Posterior cingulate gyrus (tissue), 11 donors: ENCODE measurements at regions of chr1 and their contacts with region 1.

Region 1: DNA sequence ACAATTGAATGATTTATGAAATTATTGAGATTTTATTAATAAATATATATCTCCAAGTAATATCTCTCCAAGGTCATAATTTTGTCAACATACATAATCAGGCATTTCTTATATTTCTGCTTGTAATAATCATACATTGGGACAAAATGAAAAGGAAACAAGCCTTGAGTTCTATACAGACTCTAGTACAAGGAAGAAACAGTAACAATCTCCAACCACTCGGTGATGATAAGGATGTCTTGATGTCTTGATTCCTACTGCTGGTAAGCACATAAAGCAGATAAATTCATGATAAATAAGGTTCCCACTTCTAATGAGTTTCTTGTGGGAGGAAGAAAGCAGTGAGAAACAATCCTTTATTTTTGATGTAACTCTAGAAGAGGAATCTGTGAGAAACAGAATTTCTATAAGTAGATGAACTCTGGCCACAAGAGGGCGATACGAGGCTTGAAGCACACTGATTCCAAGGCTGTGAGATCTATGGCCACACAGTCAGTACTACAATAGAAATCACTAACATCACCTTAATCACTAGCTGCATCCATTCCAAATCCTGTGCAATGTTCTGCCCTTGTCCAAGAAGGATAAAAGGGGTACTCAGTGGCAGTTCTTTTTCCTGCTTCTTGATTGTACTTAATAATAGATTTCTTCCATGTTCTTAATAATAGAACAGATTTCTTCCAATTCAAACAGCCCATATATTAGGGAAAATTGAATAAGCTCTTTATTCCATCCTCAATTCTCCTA is 41.4 kb upstream of the LRRC8B start:
- DNase-seq: peak in 9 of 10 donors; percentile 43 to 95 (median 79)

Region 2: GRCh38 chr1:89598450-89599331 is 115.5 kb after region 1 on chr1:
- intact Hi-C with region 1: loop called (anchors 1 kb)
- DNase-seq: no peak

Region 3: DNA sequence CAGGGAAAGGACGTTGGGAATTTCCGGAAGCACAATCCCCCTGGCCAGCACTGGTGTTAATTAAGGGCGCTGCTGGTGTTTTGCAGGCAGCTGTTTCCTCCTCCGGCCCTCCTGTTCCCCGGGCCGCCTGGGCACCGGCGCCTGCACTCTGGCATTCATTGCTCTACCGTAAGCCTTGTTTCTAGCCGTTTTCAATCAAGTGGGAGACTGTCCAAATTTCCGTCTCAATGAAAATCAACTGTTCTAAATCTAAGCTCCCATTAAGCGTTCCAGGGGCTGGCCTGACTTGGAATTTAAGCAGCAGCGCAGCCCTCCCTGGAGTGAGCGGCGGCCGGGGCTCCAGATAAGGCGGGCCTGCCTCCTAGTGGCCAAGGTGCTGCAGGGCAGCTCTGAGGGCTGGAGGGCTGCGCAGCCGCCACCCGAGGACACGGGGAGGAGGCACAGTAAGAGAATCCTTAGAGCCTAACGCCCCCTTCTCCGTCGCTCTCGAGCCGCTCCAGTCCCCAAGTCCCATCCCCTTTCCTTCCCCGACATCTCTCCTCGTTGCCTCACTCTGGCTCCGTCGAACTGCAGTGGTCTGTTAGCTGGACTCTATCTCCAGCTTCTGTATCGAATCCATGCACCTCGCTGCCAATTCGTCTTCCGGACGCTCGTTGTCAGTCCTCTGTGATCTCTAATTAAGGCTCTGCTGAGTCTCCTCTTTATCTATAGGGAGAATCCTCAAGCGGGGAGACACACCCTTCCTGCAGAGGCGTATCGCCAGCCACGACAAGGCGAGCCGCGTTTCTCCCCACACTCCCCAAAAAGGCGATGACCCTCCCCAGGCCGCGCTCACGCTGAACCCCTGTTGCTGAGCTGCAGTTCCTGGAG is 279.8 kb after region 1 on chr1:
- intact Hi-C with region 1: loop called (anchors 1 kb)
- DNase-seq: peak; percentile 82 to 98 (median 88)

Region 4: GRCh38 chr1:90210631-90211491 is 727.7 kb after region 1 on chr1:
- intact Hi-C with region 1: no loop called
- DNase-seq: no peak